Activated T-helper 2 cell treated with anti-CD3 and anti-CD28 coated beads, Interferon-gamma antibody, Interleukin-2, Interleukin-4, amounts not matched to agents 10 μg/mL and 5 μg/mL and 100 μg/mL, durations not matched to agents 14 hours and 24 hours and 36 hours (primary cell): ENCODE measurements at regions of chr4 and their contacts with region 1.

Region 1: DNA sequence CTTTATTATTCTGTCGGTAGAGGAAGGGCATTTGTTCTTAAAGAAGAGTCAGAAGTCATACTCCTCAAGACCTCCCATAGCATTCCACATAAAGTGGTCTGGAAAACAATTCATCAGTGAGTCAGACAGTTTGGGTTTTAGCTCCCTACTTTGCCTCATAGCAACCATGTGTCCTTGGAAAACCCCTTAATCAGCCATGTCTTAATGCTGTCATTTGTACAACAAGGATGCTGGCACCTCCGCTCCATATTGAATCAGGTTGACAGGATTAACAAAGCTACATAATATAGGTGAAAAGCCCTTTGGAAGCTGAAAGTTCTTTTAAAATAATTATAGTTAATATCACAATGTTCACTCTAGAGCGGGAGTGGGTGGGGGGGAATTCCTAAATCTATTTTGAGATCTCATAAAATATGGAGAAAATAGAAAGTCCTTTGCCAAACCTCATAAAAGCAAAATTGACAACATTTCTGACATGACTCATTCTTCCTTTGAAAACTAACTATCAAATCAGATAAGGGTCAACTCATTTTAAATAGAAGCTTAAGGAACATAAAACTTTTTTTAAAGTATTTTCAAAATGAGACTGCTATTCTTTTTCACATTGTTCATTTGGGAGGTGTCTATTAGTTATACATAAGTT is 37.3 kb upstream of the GUCY1A1 start:
- DNase-seq: no peak
- H3K4me3 Mint-ChIP-seq: no peak overlapping the region
- H3K27ac Mint-ChIP-seq: peak overlapping the region; percentile 58
- H3K4me1 Mint-ChIP-seq: peaks cover 34% of the 10 kb centered on the region
- H3K27me3 Mint-ChIP-seq: peaks cover 1% of the 10 kb centered on the region

Region 2: DNA sequence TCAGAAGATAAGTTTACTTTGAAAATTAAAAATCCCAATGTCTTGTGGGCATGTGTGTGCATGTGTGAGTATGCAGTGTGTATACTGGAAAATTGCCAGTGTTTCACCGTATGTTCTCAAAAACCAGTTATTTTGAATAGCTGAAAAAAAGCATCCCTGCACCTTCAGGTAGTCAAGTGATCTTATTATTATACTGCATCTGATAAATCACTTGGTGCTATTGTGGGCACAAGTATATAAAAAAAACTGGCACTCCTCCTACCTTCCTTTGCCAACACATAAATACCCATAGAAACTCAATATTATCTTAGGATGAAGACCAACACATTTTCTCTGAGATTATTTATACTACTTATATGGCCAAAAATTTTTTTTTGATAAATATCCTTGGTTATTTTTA is 161.0 kb before region 1 on chr4:
- intact Hi-C with region 1: no loop called
- DNase-seq: no peak
- H3K4me3 Mint-ChIP-seq: no peak overlapping the region
- H3K27ac Mint-ChIP-seq: no peak overlapping the region
- H3K4me1 Mint-ChIP-seq: peaks cover 2% of the 10 kb centered on the region
- H3K27me3 Mint-ChIP-seq: no peaks in the 10 kb centered on the region

Region 3: DNA sequence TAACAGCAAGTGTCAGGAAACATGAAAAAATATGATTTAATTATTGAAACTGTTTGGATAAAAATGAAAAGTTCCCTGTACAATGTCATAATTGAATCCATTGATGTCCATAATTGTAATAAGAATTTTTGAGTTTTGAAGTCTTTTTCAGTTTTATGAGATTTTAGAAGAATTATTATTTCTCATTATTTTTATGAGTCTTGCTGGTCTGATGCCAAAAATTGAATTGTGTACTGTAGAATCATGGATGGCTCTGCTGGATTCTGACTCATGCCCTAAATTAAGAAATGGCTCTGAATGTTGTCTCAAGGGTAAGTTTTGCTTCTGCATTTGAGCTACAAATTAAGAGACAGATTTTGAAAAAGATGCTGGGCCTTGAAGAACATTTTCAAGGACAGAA is 119.7 kb before region 1 on chr4:
- intact Hi-C with region 1: loop called (anchors 2 kb)
- DNase-seq: no peak
- H3K4me3 Mint-ChIP-seq: no peak overlapping the region
- H3K27ac Mint-ChIP-seq: no peak overlapping the region
- H3K4me1 Mint-ChIP-seq: peaks cover 7% of the 10 kb centered on the region
- H3K27me3 Mint-ChIP-seq: peaks cover 18% of the 10 kb centered on the region

Region 4: DNA sequence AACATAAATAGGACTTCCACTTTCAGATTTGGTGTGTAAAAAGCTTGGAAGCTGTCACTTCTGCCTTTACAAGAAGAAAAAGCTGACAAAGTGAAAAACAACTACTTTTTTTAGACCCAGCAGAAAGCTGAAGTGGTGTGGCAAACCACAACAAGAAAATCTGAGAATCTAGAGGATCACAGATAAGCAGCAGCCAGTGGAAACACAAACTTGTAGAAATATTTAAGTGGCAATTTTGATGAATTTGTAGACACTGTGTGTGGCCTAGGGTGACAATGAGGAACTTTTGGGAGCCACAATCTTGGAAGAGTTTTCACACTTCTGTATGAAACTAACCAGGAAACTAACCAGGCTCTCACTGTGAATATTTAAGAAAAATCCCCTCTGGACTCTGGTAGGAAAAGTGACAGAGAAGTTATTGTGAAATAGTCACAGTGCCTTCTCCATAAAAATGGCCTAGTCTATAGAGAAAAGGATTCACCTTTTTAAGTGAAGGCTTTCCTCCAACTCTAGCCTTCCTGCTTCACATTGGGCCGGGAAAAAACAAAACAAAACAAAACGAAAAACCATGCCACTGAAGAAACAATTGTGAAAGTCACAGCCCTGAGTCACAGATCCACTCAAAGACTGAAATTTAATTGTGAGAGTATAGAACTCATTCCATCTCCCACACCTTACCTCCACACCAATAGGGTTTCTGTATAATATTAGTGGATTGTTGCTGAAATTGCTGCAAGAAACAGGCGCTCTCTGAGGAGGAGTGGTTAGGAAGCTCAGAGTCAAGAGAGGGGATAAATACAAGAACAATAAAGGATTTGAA is 10.6 kb after region 1 on chr4:
- intact Hi-C with region 1: loop called (anchors 1 kb)
- DNase-seq: peak; percentile 18
- H3K4me3 Mint-ChIP-seq: no peak overlapping the region
- H3K27ac Mint-ChIP-seq: peak overlapping the region; percentile 67
- H3K4me1 Mint-ChIP-seq: peaks cover 22% of the 10 kb centered on the region
- H3K27me3 Mint-ChIP-seq: peaks cover 25% of the 10 kb centered on the region

Region 5: DNA sequence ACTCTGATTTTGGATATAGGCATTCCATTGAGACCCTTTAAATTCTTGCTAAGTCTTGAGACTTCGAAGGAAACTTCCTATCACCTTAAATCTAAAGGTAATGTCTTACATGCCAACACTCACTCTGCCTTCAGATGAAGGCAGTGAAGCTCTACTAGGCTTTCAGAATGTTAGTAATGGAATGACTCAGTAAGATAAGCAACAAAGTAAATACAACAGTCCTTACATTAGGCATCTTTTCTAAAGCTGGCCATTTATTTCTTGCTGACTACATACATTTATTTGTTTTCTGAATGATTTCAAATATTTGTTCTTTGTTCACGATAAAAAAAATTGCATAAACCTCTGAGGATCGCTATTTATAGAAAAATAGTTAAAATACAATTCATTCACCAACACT is 193.3 kb after region 1 on chr4:
- intact Hi-C with region 1: no loop called
- DNase-seq: no peak
- H3K4me3 Mint-ChIP-seq: no peak overlapping the region
- H3K27ac Mint-ChIP-seq: no peak overlapping the region
- H3K4me1 Mint-ChIP-seq: no peaks in the 10 kb centered on the region
- H3K27me3 Mint-ChIP-seq: no peaks in the 10 kb centered on the region

Region 6: GRCh38 chr4:156401371-156401770 is 772.1 kb after region 1 on chr4:
- intact Hi-C with region 1: no loop called
- DNase-seq: no peak
- H3K4me3 Mint-ChIP-seq: no peak overlapping the region
- H3K27ac Mint-ChIP-seq: no peak overlapping the region
- H3K4me1 Mint-ChIP-seq: no peaks in the 10 kb centered on the region
- H3K27me3 Mint-ChIP-seq: no peaks in the 10 kb centered on the region